Activated T-helper 1 cell treated with anti-CD3 and anti-CD28 coated beads, Interleukin-12 subunit alpha, Interleukin-12 subunit beta, Interleukin-2, Interleukin-4 antibody, amounts not matched to agents 30 ng/mL and 10 ng/mL and 1 ng/mL, durations not matched to agents 14 hours and 24 hours and 36 hours (primary cell): ENCODE measurements at regions of chr2 and their contacts with region 1.

Region 1: GRCh38 chr2:190791347-190791975 is 89.2 kb upstream of the GLS start:
- DNase-seq: no peak
- H3K4me3 Mint-ChIP-seq: peak overlapping the region; percentile 19
- H3K27ac Mint-ChIP-seq: peak overlapping the region; percentile 74
- H3K4me1 Mint-ChIP-seq: peaks cover 76% of the 10 kb centered on the region
- H3K27me3 Mint-ChIP-seq: no peaks in the 10 kb centered on the region

Region 2: DNA sequence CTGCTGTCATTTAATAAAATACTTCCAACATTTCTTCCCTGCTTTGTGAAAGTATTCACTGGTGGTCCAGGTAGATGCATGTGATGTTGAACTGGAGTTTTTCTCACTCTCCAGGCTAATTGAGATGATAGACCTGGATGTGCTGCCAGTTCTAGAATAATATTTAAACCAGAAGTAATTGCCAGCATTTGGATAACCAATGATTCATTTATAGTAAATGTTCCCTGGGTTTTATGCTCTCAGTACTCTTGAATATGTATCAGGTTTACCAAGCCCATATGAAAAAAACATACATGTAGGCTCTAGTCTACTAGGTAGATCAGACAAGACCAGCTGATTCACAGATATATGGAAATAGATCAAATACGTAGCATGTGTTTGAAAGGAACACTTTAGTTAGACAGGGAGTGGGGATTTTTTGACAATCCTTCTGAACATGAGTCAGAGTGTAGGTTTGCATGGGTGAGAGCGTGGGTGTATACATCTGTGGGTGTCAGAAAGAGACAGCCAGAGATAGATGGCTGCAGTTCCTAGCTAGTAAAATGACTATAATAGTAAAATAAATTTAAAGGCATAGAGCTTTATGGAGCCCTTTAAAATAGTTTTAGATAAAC is 27.5 kb before region 1 on chr2:
- intact Hi-C with region 1: loop called (anchors 1 kb)
- DNase-seq: no peak
- H3K4me3 Mint-ChIP-seq: peak overlapping the region; percentile 3
- H3K27ac Mint-ChIP-seq: peak overlapping the region; percentile 11
- H3K4me1 Mint-ChIP-seq: peaks cover 44% of the 10 kb centered on the region
- H3K27me3 Mint-ChIP-seq: no peaks in the 10 kb centered on the region